Dorsolateral prefrontal cortex (tissue), 120 donors: ENCODE measurements at regions of chr16 and their contacts with region 1.

Region 1: DNA sequence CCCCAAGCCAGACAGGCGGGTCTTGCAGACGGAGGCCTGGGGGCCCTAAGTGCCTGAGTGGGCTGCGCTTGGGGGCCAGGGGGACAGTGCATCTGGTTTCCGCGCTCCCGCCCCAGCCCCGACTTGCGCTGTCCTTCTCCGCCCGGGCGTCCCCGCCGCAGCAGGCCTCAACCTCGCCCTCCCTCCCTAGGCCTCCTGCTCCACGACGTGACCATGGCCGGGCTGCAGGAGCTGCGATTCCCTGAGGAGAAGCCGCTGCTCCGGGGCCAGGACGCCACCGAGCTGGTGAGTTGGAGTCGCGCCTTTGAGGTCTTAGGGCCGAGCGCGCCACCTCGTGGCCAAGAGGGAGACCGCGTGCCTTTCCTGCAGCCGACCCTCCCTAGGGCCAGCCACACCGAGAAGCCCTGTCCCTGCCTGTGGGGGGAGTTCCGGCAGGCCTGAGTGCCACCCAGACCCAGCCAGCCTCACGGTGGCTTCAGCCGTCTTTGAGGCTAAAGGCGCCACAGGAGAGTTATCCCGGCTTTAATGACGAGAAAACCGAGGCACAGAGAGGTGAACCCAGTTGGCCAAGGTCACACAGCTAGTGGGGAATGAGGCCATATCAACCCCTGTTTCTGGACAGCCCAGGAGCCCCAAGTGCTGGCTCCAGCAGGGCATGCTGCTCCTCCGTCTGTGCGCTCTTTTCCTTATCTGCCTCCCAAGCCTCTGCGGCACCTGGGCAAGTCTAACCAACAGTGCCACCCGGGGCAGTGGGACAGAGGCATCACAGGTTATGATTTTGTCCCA is 12.2 kb upstream of the NDRG4 start:
- DNase-seq: peak; percentile 74 to 88 (median 83)
- H3K4me3 ChIP-seq: peak overlapping the region in 50 of 59 donors; percentile 4 to 56 (median 43)
- H3K27ac ChIP-seq: peak overlapping the region in 33 of 59 donors; percentile 1 to 87 (median 51)
- H3K27me3 ChIP-seq: no peaks in the 10 kb centered on the region
- CTCF ChIP-seq: peak; percentile 75 to 98 (median 94)

Region 2: GRCh38 chr16:58025351-58026138 is 462.2 kb before region 1 on chr16 and contains the start of gene MMP15:
- intact Hi-C with region 1: loop called in 1 of 2 experiments (anchors 10 kb)
- DNase-seq: peak in 6 of 10 donors; percentile 36 to 76 (median 59)
- H3K4me3 ChIP-seq: peak within 1 kb of the TSS; percentile 45 to 82 (median 68)
- H3K27ac ChIP-seq: peak within 1 kb of the TSS in 34 of 59 donors; percentile 3 to 81 (median 52)
- H3K27me3 ChIP-seq: peaks cover 0 to 6% (median 0%) of the 10 kb centered on the region in 45 donors
- CTCF ChIP-seq: peak in 2 of 56 donors; percentile 3 to 9
- total RNA-seq, gene MMP15: 4.7 to 17.4 (median 8.2) TPM

Region 3: GRCh38 chr16:58198022-58198683 is 289.6 kb before region 1 on chr16 and contains the start of gene CSNK2A2:
- intact Hi-C with region 1: loop called in 1 of 2 experiments (anchors 10 kb)
- DNase-seq: peak; percentile 30 to 76 (median 56)
- H3K4me3 ChIP-seq: peak within 1 kb of the TSS; percentile 51 to 88 (median 75)
- H3K27ac ChIP-seq: peak within 1 kb of the TSS in 5 of 59 donors; percentile 63 to 85 (median 71)
- H3K27me3 ChIP-seq: peaks cover 0 to 3% (median 0%) of the 10 kb centered on the region in 45 donors
- CTCF ChIP-seq: peak in 31 of 56 donors; percentile 13 to 60 (median 28)
- total RNA-seq, gene CSNK2A2: 39.0 to 73.3 (median 54.9) TPM

Region 4: GRCh38 chr16:58299757-58300349 is 187.9 kb before region 1 on chr16:
- intact Hi-C with region 1: no loop called
- DNase-seq: no peak
- H3K4me3 ChIP-seq: no peak overlapping the region
- H3K27ac ChIP-seq: no peak overlapping the region
- H3K27me3 ChIP-seq: no peaks in the 10 kb centered on the region
- CTCF ChIP-seq: peak in 5 of 56 donors; percentile 9 to 32 (median 19)

Region 5: GRCh38 chr16:58336332-58337089 is 151.2 kb before region 1 on chr16:
- intact Hi-C with region 1: loop called (anchors 2 kb)
- DNase-seq: peak; percentile 70 to 92 (median 86)
- H3K4me3 ChIP-seq: peak overlapping the region; percentile 6 to 65 (median 44)
- H3K27ac ChIP-seq: peak overlapping the region in 1 of 59 donors; percentile 4
- H3K27me3 ChIP-seq: no peaks in the 10 kb centered on the region
- CTCF ChIP-seq: peak; percentile 90 to 100 (median 96)

Region 6: GRCh38 chr16:58392215-58393137 is 95.3 kb before region 1 on chr16 and contains the start of gene GINS3:
- intact Hi-C with region 1: loop called in 1 of 2 experiments (anchors 5 kb)
- DNase-seq: peak; percentile 83 to 94 (median 92)
- H3K4me3 ChIP-seq: peak within 1 kb of the TSS; percentile 56 to 100 (median 91)
- H3K27ac ChIP-seq: peak within 1 kb of the TSS in 54 of 59 donors; percentile 1 to 87 (median 63)
- H3K27me3 ChIP-seq: no peaks in the 10 kb centered on the region
- CTCF ChIP-seq: peak in 22 of 56 donors; percentile 4 to 42 (median 19)
- total RNA-seq, gene GINS3: 1.6 to 9.8 (median 3.4) TPM